HepG2 (cell line): ENCODE measurements at regions of chr16 and their contacts with region 1.

Region 1: DNA sequence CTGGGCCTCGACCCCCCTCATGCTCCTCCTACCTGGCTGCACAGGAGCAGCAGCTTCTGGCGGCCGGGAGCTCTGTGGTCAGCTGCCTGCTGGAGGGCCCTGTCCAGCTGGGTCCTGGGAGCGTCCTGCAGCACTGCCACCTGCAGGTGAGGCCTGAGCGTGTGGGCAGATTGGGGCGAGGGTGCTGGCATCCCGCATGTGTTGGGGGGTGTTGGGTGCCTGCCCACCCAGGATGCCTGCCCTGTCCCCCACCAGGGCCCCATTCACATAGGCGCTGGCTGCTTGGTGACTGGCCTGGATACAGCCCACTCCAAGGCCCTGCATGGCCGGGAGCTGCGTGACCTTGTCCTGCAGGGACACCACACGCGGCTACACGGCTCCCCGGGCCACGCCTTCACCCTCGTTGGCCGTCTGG is 16.5 kb downstream of the FCSK start:
- DNase-seq: peak; percentile 61
- ATAC-seq: peak; percentile 87
- H3K4me3 ChIP-seq: no peak overlapping the region
- H3K27ac ChIP-seq: no peak overlapping the region
- H3K4me1 ChIP-seq: peaks cover 5% of the 10 kb centered on the region; the same call in 1 of the 2 replicates
- H3K27me3 ChIP-seq: no peaks in the 10 kb centered on the region
- CTCF ChIP-seq: peak; percentile 96
- EP300 ChIP-seq: no peak
- POLR2A ChIP-seq: no peak
- RAD21 ChIP-seq: peak; percentile 99

Region 2: DNA sequence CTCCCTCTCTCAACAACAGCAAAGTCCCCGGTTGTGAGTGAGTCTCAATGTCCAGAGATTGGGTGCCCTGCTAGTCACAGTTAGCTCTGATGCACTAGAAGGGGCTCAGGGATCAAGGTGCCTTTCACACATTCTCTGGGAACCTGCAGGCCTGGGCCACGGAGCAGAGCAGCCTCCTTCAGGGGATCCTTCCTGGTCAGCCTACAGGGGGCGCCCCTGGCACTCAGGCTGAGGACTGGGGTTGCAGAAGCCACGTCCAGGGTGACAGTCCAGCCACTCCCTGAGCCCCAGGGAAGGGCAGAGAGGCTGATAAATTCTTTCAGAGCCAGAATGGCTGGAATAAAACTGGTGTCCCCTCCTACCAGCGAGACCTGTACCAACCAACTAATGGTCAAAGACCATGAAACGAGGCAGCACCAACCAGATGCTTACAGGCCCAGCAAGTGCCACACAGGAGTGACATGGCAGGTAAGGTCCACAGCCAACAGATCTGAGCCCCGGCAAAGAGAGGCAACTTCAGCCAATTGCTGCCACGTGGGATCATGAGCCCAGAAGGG is 75.5 kb before region 1 on chr16:
- CTCF ChIA-PET with region 1: interaction called, 47 read pairs
- POLR2A ChIA-PET with region 1: interaction called, 4 read pairs
- in situ Hi-C with region 1: loop called (anchors 5 kb)
- intact Hi-C with region 1: loop called (anchors 1 kb)
- DNase-seq: peak; percentile 72
- ATAC-seq: peak; percentile 95
- H3K4me3 ChIP-seq: no peak overlapping the region
- H3K27ac ChIP-seq: no peak overlapping the region
- H3K4me1 ChIP-seq: peaks cover 4% of the 10 kb centered on the region; the same call in 1 of the 2 replicates
- H3K27me3 ChIP-seq: no peaks in the 10 kb centered on the region
- CTCF ChIP-seq: peak; percentile 99
- EP300 ChIP-seq: no peak
- POLR2A ChIP-seq: no peak
- RAD21 ChIP-seq: peak; percentile 99